ENCODE measurements at regions of chr3 and their contacts with region 1.

Region 1: DNA sequence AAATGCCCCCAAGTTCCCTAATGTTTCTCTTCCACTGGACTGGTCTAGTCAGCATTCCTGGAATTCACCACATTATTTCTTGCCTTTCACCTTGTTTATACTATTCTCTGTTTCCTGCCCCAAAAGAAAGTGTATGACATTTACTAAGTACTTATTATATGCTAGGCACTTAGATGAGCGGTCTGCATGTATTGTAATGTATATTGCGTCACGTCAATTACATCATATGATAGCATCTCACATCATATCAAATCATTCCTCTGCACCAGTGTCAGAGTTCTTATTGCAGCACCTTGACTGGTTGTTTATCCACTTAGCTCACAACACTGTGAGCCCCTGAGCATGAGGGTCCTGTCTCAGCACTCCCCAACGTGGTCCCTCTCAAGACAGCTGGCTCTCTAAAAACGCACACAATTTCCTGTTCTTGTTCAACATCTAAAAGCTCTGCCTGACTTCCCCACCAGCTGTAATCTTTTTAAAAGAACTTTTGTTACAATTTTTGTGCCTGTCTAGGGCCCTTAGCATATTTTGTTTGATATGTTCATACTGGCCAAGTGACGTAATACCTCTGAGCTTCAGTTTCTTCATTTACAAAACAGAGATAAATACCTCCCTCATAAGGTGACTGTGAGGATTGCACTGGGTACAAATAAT is 58.8 kb downstream of the ARHGAP31 start:
- DNase-seq: no peak
- H3K4me3 Mint-ChIP-seq: no peak overlapping the region
- H3K27ac Mint-ChIP-seq: no peak overlapping the region
- H3K4me1 Mint-ChIP-seq: peaks cover 19% of the 10 kb centered on the region
- H3K27me3 Mint-ChIP-seq: peaks cover 6% of the 10 kb centered on the region

Region 2: GRCh38 chr3:119145500-119146191 is 207.3 kb before region 1 on chr3 and contains the start of gene TEX55:
- intact Hi-C with region 1: loop called (anchors 10 kb)
- DNase-seq: no peak
- H3K4me3 Mint-ChIP-seq: no peak within 1 kb of the TSS
- H3K27ac Mint-ChIP-seq: no peak within 1 kb of the TSS
- H3K4me1 Mint-ChIP-seq: no peaks in the 10 kb centered on the region
- H3K27me3 Mint-ChIP-seq: no peaks in the 10 kb centered on the region
- total RNA-seq, gene TEX55: not detected in 2 replicates

Region 3: DNA sequence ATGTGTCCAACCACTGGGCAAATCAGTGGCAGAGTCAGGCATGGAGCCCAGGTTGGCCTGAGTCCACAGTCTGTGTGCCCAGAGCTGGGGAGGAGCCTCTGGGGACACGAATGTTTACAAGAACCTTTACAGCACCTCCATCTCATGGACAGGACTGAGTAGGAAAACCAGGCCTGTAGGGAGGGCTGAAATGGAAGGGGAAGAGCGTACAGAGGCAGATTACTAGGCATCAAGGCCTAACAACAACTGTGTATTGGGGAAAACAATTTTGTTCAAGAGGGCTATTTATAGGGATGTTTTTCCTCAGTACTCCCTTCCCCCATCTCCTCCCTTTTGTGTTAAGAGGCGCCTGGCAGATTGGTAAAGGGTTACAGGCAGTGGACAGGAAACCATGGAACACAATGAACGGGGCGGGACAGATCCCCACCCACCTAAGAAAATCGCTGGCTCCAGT is 73.8 kb before region 1 on chr3:
- intact Hi-C with region 1: loop called (anchors 1 kb)
- DNase-seq: no peak
- H3K4me3 Mint-ChIP-seq: no peak overlapping the region
- H3K27ac Mint-ChIP-seq: no peak overlapping the region
- H3K4me1 Mint-ChIP-seq: peaks cover 7% of the 10 kb centered on the region
- H3K27me3 Mint-ChIP-seq: peaks cover 1% of the 10 kb centered on the region

Region 4: DNA sequence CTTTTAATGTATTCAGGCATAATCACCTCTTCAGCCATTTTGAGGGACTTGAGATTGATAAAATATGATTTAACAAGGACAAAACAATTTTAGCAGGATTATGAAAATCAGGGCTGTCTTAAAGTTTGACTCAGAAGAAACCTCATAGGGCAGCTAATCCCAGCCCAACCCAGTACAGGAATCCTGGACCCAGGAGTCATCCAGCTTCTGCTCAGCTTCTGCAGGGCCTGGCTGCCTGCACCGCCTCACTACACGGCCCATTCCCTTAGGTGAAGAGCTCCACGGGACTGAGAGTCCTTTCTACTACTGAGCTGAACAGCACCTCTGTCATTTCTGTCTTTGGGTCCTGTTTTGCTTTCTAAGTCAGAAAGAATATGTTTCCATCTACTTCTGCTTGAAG is 21.3 kb before region 1 on chr3:
- intact Hi-C with region 1: no loop called
- DNase-seq: no peak
- H3K4me3 Mint-ChIP-seq: no peak overlapping the region
- H3K27ac Mint-ChIP-seq: no peak overlapping the region
- H3K4me1 Mint-ChIP-seq: peaks cover 13% of the 10 kb centered on the region
- H3K27me3 Mint-ChIP-seq: peaks cover 2% of the 10 kb centered on the region